Uterus (tissue), 4 donors: ENCODE measurements at regions of chr7 and their contacts with region 1.

Region 1: DNA sequence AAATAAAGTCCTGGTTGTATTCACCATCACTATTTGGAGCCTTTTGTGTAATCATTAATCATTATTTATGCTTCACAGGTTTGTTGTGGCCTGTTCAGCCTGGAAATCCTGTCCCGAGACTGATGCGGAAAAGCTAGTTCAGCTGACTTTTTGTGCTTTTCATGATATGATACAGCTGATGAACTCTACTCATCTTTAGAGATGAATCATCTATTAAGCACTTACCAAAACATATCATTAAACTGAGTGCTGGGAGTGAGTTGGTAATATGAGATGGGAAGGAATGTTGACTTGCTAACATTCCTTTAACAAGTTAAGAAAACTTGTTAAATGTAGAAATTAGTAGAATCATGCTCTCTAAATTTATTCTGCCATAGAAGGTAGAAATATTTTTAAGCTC is 53.0 kb downstream of the CROT start:
- DNase-seq: no peak
- H3K4me3 ChIP-seq: no peak overlapping the region
- H3K27ac ChIP-seq: peak overlapping the region; percentile 30 to 56
- H3K4me1 ChIP-seq: peaks cover 0 to 3% of the 10 kb centered on the region in 2 donors
- H3K27me3 ChIP-seq: no peaks in the 10 kb centered on the region
- CTCF ChIP-seq: no peak
- POLR2A ChIP-seq: no peak

Region 2: DNA sequence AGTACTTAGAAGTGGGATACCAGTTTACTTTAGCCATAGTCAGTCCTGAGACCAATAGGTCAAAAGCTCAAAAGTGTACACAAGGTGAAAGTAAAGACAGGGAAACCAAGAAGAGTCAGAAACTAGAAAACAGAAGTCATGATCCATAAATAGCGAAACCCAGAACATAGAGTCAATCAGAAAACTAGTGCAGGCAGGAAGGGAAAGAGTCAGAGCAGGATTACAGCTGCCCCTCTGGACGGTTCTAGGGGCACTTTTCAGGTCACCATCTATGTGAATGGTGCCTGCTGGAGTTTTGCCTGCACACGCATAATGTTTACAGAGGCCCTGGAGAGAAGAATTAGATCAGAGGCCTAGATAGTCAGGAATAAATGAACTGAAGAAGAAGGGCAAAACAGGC is 268.6 kb before region 1 on chr7:
- intact Hi-C with region 1: loop called (anchors 10 kb)
- DNase-seq: no peak
- H3K4me3 ChIP-seq: no peak overlapping the region
- H3K27ac ChIP-seq: no peak overlapping the region
- H3K4me1 ChIP-seq: no peaks in the 10 kb centered on the region
- H3K27me3 ChIP-seq: no peaks in the 10 kb centered on the region
- CTCF ChIP-seq: no peak
- POLR2A ChIP-seq: no peak